PC-9 (cell line): ENCODE measurements at regions of chr10 and their contacts with region 1.

Region 1: GRCh38 chr10:118568327-118568848 is 27.1 kb downstream of the PRLHR start:
- DNase-seq: peak; percentile 30 to 42
- H3K4me3 ChIP-seq: peak overlapping the region; percentile 31; the same call in 1 of the 2 replicates
- H3K27ac ChIP-seq: no peak overlapping the region
- H3K4me1 ChIP-seq: no peaks in the 10 kb centered on the region; the same call in 1 of the 2 replicates
- H3K27me3 ChIP-seq: no peaks in the 10 kb centered on the region
- CTCF ChIP-seq: peak; percentile 84

Region 2: DNA sequence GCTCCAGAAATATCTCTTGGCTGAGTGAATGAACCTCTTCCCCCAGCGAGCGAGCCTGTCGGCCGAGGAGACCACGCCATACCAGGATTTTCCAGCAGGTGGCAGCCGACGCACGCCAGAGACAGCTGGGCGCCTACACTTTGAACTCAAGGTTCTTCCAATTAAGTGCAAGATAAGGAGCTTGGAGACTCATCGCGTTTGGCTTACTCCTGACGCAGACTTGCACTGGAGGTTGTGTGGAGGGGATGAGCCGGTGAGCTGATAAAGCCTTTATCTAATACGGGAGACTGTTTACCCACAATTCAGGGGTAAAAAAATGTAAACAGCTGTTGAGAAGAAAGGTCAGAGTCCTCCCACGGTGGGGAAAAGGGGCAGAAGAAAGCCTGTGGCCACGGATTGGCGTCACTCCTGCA is 1071.8 kb before region 1 on chr10:
- CTCF ChIA-PET with region 1: no interaction called
- POLR2A ChIA-PET with region 1: no interaction called
- intact Hi-C with region 1: loop called (anchors 2 kb)
- DNase-seq: peak; percentile 57 to 58
- H3K4me3 ChIP-seq: no peak overlapping the region
- H3K27ac ChIP-seq: no peak overlapping the region
- H3K4me1 ChIP-seq: no peaks in the 10 kb centered on the region
- H3K27me3 ChIP-seq: peaks cover 11% of the 10 kb centered on the region
- CTCF ChIP-seq: peak; percentile 86

Region 3: GRCh38 chr10:118557946-118558345 is 10.4 kb before region 1 on chr10:
- CTCF ChIA-PET with region 1: no interaction called
- POLR2A ChIA-PET with region 1: no interaction called
- intact Hi-C with region 1: no loop called
- DNase-seq: no peak
- H3K4me3 ChIP-seq: no peak overlapping the region
- H3K27ac ChIP-seq: no peak overlapping the region
- H3K4me1 ChIP-seq: no peaks in the 10 kb centered on the region
- H3K27me3 ChIP-seq: no peaks in the 10 kb centered on the region
- CTCF ChIP-seq: no peak

Region 4: DNA sequence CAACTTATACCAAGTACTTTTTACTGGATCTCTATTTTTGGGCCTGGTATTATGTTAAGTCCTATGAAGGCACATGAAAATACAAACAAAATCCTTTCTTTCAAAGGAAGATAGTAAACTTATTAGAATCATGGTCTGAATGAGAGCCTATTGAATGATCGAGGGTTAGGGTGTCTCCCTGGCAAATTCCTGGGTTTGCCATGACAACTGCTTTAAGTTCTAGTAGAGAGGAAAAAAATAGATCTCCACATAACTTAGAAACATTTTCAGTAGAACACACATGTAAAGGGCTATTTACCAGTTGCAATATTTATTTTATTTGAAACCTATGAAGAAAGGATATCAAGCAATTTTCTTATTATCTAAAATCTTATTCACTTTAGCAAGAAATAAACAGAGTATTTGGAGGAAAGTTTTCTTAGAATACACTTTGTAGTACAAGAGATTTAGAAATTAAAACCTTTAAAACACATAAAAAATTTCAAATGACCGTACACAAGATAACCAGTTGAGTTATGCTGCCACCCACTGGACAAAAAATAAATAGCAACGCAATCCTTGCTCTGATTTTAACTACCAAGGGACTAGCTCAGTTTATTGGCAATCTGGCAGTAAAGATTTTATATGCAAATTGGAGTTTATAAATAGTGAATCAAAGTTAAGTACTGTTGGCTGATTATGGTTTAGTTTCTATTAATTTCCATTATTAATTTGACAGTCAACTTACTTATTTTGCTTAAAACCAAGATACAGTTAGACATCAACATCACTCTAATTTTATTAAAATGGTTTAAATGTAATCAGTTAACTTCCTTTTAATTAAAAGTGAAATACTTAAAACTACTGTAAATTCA is 152.5 kb after region 1 on chr10:
- CTCF ChIA-PET with region 1: no interaction called
- POLR2A ChIA-PET with region 1: no interaction called
- intact Hi-C with region 1: loop called (anchors 2 kb)
- DNase-seq: peak; percentile 26 to 46
- H3K4me3 ChIP-seq: no peak overlapping the region
- H3K27ac ChIP-seq: no peak overlapping the region
- H3K4me1 ChIP-seq: no peaks in the 10 kb centered on the region
- H3K27me3 ChIP-seq: no peaks in the 10 kb centered on the region
- CTCF ChIP-seq: peak; percentile 81

Region 5: DNA sequence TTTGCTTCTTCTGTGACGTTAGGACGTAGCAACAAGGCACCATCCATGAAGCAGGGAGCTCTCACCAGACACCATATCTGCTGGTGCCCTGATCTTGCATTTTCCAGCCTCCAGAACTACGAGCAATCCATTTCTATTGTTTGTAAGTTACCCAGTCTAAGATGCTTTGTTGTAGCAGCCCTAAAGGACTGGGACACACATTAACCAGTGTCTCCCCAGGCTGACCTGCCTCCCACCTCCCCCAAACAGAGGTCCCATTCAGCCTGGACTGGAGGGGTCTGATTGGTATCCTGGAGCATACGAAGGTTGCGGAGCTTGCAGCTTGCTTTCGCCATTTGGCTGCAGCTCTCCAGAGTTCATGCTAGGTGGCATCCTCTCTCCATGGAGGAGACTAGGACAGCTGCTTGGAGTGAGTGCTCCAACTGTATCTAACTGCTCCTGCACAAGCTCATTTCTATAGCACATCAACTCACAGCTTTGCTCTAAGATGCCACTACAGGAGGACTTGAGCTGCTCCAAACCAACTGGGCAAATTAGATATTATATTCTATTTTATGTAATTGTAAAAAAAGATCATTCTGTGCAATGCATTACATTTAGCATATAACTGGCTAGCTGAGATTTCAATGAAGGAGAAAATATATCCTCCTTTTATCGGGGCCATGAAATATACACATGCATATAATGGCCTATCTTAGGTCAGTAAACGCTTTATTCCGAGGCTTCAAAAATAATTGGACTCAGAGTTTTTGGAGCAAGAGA is 631.0 kb after region 1 on chr10:
- CTCF ChIA-PET with region 1: no interaction called
- POLR2A ChIA-PET with region 1: no interaction called
- intact Hi-C with region 1: loop called (anchors 10 kb)
- DNase-seq: peak; percentile 27 to 44
- H3K4me3 ChIP-seq: no peak overlapping the region
- H3K27ac ChIP-seq: no peak overlapping the region
- H3K4me1 ChIP-seq: peaks cover 22% of the 10 kb centered on the region
- H3K27me3 ChIP-seq: no peaks in the 10 kb centered on the region
- CTCF ChIP-seq: peak; percentile 63